ENCODE measurements at regions of chr2 and their contacts with region 1.

Region 1: DNA sequence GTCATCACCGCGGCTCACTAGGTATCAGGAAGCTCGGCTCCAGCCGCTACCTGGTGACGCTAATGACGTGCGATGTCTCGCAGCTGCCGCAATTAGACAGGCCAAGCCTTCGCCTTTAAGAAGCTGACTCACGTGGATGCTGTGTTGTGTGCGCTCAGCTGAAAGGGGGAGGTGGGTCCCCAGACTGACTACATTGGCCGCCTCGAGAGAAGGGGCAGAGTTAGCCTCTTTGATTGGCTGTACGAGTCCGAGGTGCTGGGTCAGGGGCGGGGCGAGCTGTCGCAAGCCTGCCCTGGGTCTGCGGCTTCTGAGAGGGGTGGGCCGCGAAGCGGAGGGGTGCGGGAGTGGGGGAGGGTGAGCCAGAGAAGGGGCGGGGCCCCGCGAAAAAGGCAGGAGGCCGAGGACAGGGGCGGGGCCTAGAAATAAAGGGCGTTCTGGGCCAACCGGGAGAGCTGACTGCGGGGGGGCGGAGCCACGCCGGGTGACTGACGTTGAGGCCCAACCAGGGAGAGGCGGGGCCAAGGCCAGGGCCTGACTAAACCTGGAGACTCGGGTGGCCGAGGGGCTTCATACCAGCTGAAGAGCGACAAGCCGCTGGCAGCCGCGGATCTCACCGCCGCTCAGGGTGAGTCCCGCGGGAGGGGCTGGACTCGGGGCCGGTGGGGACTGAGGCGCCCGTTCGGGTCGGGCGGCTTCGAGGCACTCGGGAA is at the start of gene YPEL5:
- DNase-seq: peak; percentile 99
- ATAC-seq: peak; percentile 92
- H3K4me3 Mint-ChIP-seq: peak within 1 kb of the TSS; percentile 83
- H3K27ac Mint-ChIP-seq: peak within 1 kb of the TSS; percentile 95
- H3K4me1 Mint-ChIP-seq: peaks cover 31% of the 10 kb centered on the region
- H3K27me3 Mint-ChIP-seq: no peaks in the 10 kb centered on the region
- total RNA-seq, gene YPEL5: 32.5 to 34.9 TPM

Region 2: DNA sequence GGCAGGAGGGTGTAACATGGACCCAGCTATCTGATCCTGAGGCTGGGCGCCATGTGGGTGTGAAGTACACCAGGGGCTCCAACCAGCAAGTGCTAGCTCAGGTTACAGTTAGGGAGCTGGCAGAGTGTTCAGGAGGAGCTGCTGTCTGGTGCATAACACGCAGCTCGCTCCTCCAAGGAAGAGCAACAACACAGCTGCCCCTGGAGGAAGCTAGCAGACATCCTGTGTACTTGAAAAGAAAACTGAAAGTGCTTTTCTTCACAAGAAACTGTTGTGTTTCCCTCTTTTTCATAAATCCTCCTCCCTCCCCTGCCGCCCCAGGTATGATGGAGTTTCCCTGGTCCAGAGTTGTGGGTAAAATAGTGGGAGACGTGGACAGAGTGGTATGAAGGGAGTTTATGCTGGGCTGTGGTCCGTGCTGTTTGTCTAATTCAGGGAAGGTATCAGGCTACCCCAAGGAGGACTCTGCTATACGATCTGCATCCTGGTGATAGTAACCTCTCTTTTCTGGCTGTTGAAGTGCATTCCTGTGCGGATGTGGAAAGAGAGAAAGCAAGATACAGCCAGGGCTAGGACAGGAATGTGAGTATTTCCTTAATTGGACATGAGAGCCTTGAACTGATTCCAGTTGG is 78.7 kb after region 1 on chr2:
- CTCF ChIA-PET with region 1: interaction called, 6 read pairs
- POLR2A ChIA-PET with region 1: interaction called, 10 read pairs
- DNase-seq: peak; percentile 70
- ATAC-seq: peak; percentile 88
- H3K4me3 Mint-ChIP-seq: peak overlapping the region; percentile 97
- H3K27ac Mint-ChIP-seq: peak overlapping the region; percentile 99
- H3K4me1 Mint-ChIP-seq: peaks cover 68% of the 10 kb centered on the region
- H3K27me3 Mint-ChIP-seq: peaks cover 2% of the 10 kb centered on the region

Measured in activated CD8-positive, alpha-beta T cell treated with anti-CD3 and anti-CD28 coated beads, Interleukin-2, amount 10 ng/mL, durations not matched to agents 7 days and 5 days (primary cell).